GM12878 (cell line): ENCODE measurements at regions of chr3 and their contacts with region 1.

Region 1: DNA sequence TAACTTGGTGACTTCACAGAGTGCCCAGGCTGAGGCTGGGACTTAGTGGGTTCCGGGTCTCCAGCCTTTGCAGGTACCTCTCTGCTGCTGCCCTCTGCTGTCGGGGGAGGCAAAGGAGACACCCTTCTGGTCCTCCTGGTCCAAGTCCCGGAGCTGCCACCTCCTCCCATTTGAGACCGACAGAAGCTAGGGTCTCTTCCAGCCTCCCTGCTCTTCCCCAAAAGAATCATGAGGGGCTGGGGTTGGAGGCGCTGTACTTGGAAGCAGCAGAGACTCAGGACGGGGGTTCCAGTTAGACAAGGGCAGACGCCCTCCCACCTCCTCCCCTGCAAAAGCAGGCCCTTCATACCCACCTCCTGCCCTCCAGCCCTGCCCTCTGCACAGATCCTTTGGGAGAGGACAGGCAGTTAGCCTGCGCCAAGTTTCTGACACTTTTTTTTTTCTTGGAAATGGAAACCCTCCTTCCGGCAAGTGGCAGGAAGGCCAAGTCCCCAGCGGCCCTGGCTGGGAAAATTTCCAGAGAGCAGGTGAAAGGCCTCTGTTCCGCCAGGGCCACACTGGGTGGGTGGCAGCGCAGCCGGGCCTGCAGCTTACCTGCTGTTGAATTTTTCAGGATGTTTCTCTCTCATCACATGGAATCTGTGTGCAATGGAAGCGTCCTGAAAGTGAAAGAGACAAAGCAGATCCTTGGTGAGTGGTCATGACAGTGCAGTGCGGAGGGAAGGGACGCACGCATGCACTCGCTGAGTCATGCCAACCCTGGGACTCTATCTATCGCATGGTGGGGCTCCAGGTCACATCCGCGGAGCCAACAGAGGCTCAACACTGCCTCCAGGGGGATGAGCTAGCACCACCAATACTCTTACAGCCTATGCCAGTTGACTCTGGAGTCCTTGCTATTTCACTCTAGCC is 119.9 kb downstream of the DGKG start:
- DNase-seq: no peak
- ATAC-seq: peak; percentile 96
- H3K4me3 ChIP-seq: peak overlapping the region; percentile 64
- H3K27ac ChIP-seq: peak overlapping the region; percentile 54
- H3K4me1 ChIP-seq: peaks cover 29% of the 10 kb centered on the region
- H3K27me3 ChIP-seq: no peaks in the 10 kb centered on the region
- CTCF ChIP-seq: peak; percentile 75 to 79 (median 75)
- EP300 ChIP-seq: no peak
- POLR2A ChIP-seq: peak; percentile 42; the same call in 1 of the 2 replicates
- RAD21 ChIP-seq: peak; percentile 89

Region 2: GRCh38 chr3:185983495-185984141 is 258.5 kb before region 1 on chr3:
- CTCF ChIA-PET with region 1: interaction called, 87 read pairs
- POLR2A ChIA-PET with region 1: interaction called, 7 read pairs
- RAD21 ChIA-PET with region 1: interaction called, 38 read pairs
- SMC1A ChIA-PET with region 1: interaction called, 55 read pairs
- in situ Hi-C with region 1: loop called (anchors 5 kb)
- intact Hi-C with region 1: loop called (anchors 1 kb)
- DNase-seq: no peak
- ATAC-seq: peak; percentile 96
- H3K4me3 ChIP-seq: no peak overlapping the region
- H3K27ac ChIP-seq: no peak overlapping the region
- H3K4me1 ChIP-seq: no peaks in the 10 kb centered on the region
- H3K27me3 ChIP-seq: no peaks in the 10 kb centered on the region
- CTCF ChIP-seq: peak; percentile 84 to 87 (median 86)
- EP300 ChIP-seq: no peak
- POLR2A ChIP-seq: no peak
- RAD21 ChIP-seq: peak; percentile 99

Region 3: DNA sequence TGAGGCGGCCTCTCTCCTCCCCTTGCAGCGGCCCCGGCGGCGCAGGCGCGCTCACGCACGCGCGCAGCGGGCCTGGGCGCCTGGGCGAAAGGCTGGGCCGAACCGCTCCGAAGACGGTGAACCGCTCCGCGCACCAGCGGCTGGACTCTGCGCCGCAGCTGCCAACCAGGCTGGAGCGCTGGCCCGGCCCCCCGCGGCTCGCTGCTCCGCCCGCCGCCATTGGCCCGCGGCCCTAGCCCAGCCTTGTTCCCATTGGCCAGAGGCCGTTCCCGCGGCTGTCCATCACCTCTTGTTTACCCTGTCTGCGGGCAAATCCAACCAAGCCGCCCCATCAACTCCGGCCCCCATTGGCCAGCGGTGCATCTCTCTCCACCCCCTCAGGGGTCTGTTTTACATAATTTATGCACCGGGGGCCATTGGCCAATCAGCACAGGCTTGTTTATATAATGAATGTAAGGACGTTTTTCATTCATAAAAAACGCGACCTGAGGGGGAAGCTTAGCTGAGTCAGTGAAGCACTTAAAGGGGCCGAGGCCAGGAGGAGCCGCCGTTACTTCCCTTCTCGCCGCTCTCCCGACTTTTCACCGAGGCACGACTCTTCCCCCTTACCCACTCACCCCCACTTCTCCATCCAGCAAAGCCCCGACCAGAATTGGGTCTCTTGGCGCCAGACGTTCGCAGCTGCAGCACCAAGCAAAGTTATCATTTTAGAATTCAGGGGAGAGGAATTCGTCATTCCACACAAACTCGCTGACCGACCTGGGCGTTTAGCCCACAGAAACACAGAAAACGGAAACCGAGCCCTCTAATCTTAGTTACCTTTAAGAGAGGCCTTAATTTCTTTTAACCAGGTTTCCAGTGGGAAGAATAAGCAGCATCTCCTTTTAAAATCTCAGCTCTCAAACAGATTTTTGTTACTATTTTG is 133.0 kb before region 1 on chr3 and contains the start of gene ETV5:
- CTCF ChIA-PET with region 1: interaction called, 5 read pairs
- POLR2A ChIA-PET with region 1: no interaction called
- RAD21 ChIA-PET with region 1: interaction called, 10 read pairs
- SMC1A ChIA-PET with region 1: interaction called, 4 read pairs
- in situ Hi-C with region 1: no loop called
- intact Hi-C with region 1: loop called (anchors 5 kb)
- DNase-seq: peak; percentile 90
- ATAC-seq: peak; percentile 96
- H3K4me3 ChIP-seq: peak within 1 kb of the TSS; percentile 79
- H3K27ac ChIP-seq: peak within 1 kb of the TSS; percentile 46; the same call in 1 of the 2 replicates
- H3K4me1 ChIP-seq: peaks cover 24% of the 10 kb centered on the region
- H3K27me3 ChIP-seq: peaks cover 0 to 15% of the 10 kb centered on the region in 2 experiments; a peak in 2 of 4 replicates
- CTCF ChIP-seq: no peak
- EP300 ChIP-seq: no peak
- POLR2A ChIP-seq: peak; percentile 89
- RAD21 ChIP-seq: no peak
- polyA plus RNA-seq, gene ETV5: 5.0 to 5.4 TPM

Region 4: GRCh38 chr3:186209810-186210752 is 32.1 kb before region 1 on chr3:
- CTCF ChIA-PET with region 1: interaction called, 10 read pairs
- POLR2A ChIA-PET with region 1: no interaction called
- RAD21 ChIA-PET with region 1: interaction called, 4 read pairs
- SMC1A ChIA-PET with region 1: interaction called, 11 read pairs
- in situ Hi-C with region 1: no loop called
- intact Hi-C with region 1: no loop called
- DNase-seq: no peak
- ATAC-seq: peak; percentile 38; the same call in 2 of the 3 replicates
- H3K4me3 ChIP-seq: no peak overlapping the region
- H3K27ac ChIP-seq: no peak overlapping the region
- H3K4me1 ChIP-seq: peaks cover 14% of the 10 kb centered on the region
- H3K27me3 ChIP-seq: no peaks in the 10 kb centered on the region; a peak in 1 of 4 replicates
- CTCF ChIP-seq: no peak
- EP300 ChIP-seq: no peak
- POLR2A ChIP-seq: no peak
- RAD21 ChIP-seq: no peak

Region 5: DNA sequence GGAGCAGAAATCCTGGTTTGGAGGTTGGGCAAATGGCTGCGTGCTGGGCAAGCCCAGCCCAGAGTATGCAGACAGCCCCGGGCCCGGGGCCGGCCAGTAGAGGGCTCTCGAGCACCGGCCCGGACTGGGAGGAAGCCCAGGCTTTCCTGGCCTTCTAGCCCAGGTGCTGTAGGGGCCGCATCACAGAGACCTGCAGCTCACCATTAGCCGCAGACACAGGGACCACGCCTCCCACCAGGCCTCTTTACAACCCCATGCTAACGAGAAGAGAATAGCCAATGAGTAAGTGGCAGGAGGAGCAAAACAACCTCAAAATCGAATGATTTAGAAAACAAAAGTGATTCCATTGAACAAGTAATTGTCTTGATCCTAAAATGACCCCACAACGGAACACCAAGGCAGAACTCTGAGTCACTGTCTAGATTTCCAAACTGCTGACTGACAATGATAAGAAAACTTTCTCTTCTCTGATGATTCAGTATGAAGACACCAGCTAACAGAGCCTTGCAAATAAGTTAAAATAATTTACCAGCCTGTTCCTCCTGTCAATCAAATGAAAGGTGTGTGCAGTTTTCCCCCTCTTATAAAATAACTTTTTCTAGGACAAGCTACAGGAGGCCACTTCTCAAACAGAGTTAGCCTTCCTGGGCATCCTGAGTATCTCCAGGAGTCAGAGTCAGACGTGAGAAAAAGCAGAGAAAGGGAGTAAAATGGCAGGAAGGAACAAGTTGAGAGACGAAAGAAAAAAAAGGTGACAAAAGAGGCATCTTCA is 17.6 kb after region 1 on chr3:
- CTCF ChIA-PET with region 1: interaction called, 61 read pairs
- POLR2A ChIA-PET with region 1: no interaction called
- RAD21 ChIA-PET with region 1: interaction called, 5 read pairs
- SMC1A ChIA-PET with region 1: interaction called, 15 read pairs
- in situ Hi-C with region 1: no loop called
- intact Hi-C with region 1: no loop called
- DNase-seq: no peak
- ATAC-seq: peak; percentile 89
- H3K4me3 ChIP-seq: no peak overlapping the region
- H3K27ac ChIP-seq: no peak overlapping the region
- H3K4me1 ChIP-seq: peaks cover 14% of the 10 kb centered on the region
- H3K27me3 ChIP-seq: no peaks in the 10 kb centered on the region
- CTCF ChIP-seq: peak; percentile 96 to 99 (median 97)
- EP300 ChIP-seq: no peak
- POLR2A ChIP-seq: no peak
- RAD21 ChIP-seq: peak; percentile 94